Calu3 (cell line): ENCODE measurements at regions of chr11 and their contacts with region 1.

Region 1: DNA sequence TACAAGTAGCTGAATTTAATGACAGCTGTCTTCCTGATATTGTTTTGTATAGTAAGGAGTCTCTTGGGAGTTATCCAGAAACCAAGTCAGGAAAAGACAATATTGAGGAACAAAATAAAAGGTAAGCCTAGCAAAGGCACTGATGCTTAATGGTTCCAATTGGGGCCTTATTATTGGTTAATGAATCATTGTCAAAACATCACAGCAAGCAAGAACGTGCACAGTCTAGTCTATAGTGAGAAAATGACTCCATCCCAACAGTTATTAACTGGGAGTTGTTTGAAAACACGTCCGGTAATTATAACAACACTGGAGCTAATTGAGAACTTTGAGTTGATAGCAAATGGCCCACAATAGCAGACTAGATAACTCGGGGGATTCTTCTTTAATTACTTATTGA is 17.7 kb downstream of the BSX start:
- DNase-seq: no peak
- H3K4me3 Mint-ChIP-seq: no peak overlapping the region
- H3K27ac Mint-ChIP-seq: no peak overlapping the region
- H3K4me1 Mint-ChIP-seq: no peaks in the 10 kb centered on the region
- H3K27me3 Mint-ChIP-seq: peaks cover 38% of the 10 kb centered on the region
- CTCF ChIP-seq: no peak

Region 2: DNA sequence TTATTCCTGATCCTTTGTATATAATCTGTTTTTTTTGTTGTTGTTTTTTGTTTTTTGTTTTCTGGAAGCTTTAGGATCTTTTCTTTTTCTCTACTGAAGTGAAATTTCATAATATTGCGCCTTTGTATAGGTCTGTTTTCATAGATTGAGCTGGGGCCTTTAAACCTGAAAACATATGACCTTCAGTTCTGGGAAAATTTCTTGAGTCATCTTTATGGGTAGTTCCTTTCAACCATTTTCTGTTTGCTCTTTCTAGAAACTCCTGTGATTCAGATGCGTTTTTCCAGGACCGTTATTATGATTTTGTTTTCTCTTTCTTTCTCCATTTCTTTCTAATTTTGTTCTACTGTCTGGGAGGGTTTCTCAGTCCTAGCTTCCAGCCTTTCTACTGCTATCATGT is 26.0 kb before region 1 on chr11:
- CTCF ChIA-PET with region 1: no interaction called
- intact Hi-C with region 1: loop called (anchors 2 kb)
- DNase-seq: no peak
- H3K4me3 Mint-ChIP-seq: no peak overlapping the region
- H3K27ac Mint-ChIP-seq: no peak overlapping the region
- H3K4me1 Mint-ChIP-seq: no peaks in the 10 kb centered on the region
- H3K27me3 Mint-ChIP-seq: no peaks in the 10 kb centered on the region
- CTCF ChIP-seq: no peak